GM10248 (cell line): ENCODE measurements at regions of chr10 and their contacts with region 1.

Region 1: DNA sequence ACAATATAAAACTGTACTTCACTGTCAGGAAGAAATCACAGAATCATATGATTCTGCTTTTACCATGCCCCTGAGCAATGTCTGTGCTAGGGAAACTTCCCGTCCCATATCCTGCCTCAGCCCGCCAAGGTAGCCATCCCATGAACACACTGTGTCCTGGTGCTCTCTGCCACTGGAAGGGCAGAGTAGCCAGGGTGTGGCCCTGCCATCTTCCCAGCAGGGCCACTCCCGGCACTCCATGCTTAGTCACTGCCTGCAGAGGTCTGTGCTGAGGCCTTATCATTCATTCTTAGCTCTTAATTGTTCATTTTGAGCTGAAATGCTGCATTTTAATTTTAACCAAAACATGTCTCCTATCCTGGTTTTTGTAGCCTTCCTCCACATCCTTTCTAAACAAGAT is 31.8 kb downstream of the AP3M1 start:
- DNase-seq: no peak
- CTCF ChIP-seq: no peak

Region 2: DNA sequence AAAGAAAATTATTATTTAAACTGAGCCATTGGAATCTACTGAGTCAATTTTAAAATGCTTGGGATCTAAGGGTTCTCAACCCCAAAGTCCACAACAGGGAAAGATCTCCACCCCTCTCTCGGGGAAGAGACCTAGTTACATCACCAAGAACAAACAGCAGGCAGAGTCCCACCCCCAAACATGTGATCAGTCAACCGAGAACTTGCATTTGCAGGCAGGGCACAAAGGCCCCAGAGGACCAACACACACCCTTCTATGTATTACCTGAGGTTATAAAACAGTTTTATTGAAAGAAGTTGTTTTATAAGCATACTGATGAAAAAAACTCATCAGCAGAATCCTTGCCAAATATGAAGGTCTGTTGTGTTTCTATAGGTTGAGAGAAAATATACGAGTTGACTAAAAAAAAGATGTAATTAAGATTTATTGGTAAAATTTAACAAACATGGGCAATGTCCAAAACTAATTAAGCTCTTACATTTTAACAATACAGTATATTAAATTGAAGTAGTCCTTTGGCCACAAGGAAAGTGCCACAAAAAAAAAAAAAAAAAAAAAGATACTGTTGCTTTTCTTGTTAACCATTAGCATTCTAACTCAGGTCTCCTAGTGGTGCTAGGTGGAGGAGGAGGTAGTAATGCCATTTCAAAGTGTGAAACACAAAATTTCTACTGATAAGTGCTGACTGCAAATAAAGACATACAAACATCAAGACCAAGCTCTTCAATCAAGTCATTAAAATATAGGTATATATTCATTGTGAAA is 526.7 kb before region 1 on chr10:
- CTCF ChIA-PET with region 1: no interaction called
- POLR2A ChIA-PET with region 1: no interaction called
- DNase-seq: peak; percentile 38
- CTCF ChIP-seq: no peak

Region 3: DNA sequence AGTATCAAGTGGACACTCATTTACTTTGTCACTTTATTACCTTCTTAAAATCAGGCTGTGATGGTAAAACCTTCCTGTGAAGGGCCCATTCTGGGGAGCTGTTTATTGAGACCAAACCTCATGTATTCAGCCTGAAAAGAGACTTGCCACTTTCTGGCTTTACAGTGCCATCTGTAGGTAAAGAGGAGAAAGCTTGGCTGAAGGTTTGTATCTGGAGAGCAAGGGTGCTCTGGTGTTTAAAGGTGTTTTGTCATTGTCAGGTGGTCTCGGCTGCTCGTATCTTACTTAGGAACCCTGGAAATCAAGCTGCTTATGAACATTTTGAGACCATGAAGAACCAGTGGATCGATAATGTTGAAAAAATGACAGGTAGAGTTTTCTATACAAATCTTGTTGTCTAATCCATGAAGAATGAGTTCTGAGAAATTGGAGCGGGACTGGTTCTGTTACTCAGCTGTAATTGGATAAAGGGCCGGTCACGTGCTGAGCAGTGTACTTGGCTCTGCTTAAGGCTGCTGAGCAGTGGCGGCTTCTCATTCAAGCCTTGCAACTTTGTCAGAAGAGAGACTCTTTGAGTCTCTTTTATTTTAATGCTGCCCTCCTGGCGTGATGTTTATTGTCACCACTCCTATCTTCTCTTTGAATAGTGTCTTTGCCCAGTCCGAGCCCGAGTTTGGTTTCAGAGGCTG is 15.1 kb before region 1 on chr10:
- CTCF ChIA-PET with region 1: interaction called, 31 read pairs
- POLR2A ChIA-PET with region 1: no interaction called
- DNase-seq: peak; percentile 63
- CTCF ChIP-seq: peak; percentile 59